ENCODE measurements at regions of chr9 and their contacts with region 1.

Region 1: GRCh38 chr9:120916588-120916987 is 10.0 kb downstream of the TRAF1 start:
- DNase-seq: no peak
- H3K4me3 Mint-ChIP-seq: peak overlapping the region; percentile 35
- H3K27ac Mint-ChIP-seq: peak overlapping the region; percentile 82
- H3K4me1 Mint-ChIP-seq: peaks cover 85% of the 10 kb centered on the region
- H3K27me3 Mint-ChIP-seq: no peaks in the 10 kb centered on the region

Region 2: DNA sequence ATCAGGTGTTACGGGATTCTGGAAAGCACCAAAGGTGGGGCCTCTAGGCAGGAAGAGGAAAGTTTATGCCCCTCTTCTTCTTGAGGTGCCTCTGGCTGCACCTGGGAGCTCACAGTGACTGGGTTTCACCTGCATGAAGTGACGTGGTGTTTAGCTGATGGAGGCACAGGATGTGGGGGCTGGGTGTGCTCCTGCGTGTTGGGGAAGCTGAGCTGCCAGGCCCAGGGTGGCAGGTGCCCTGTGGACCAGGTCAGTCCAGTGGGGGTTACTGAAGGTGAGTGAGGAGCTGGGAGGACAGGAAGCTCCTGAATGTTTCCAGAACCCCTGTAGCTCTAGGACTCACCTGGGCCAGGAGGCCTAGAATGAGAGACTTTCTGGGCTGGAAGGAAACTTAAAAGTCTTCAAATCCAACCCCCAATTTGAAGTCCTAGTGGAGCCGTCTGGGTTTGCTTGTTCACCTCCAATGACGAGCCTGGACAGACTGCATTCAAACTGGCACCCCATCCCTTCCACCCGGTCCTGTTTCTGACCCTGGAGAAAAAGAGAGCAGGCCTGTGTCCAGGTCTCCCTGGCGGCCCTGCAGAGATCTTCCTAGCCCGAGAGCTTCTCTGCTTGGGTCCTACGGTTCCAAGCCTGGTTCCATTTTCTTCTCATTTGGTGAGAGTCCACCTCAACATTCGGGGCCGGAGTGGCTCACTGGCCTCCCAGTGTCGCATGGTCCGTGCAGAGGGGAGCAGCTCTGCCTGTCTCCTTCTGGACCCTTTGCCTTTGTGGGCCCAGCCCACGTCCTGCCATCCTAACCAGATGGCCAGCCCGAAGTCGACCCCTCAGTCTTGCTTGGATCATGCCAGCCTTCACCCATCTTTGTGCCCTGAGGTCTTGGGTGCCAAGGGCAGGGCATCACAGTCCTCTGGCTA is 12.3 kb before region 1 on chr9:
- CTCF ChIA-PET with region 1: interaction called, 8 read pairs
- POLR2A ChIA-PET with region 1: interaction called, 1,205 read pairs
- DNase-seq: peak; percentile 59
- H3K4me3 Mint-ChIP-seq: no peak overlapping the region
- H3K27ac Mint-ChIP-seq: peak overlapping the region; percentile 86
- H3K4me1 Mint-ChIP-seq: peaks cover 84% of the 10 kb centered on the region
- H3K27me3 Mint-ChIP-seq: no peaks in the 10 kb centered on the region

Region 3: DNA sequence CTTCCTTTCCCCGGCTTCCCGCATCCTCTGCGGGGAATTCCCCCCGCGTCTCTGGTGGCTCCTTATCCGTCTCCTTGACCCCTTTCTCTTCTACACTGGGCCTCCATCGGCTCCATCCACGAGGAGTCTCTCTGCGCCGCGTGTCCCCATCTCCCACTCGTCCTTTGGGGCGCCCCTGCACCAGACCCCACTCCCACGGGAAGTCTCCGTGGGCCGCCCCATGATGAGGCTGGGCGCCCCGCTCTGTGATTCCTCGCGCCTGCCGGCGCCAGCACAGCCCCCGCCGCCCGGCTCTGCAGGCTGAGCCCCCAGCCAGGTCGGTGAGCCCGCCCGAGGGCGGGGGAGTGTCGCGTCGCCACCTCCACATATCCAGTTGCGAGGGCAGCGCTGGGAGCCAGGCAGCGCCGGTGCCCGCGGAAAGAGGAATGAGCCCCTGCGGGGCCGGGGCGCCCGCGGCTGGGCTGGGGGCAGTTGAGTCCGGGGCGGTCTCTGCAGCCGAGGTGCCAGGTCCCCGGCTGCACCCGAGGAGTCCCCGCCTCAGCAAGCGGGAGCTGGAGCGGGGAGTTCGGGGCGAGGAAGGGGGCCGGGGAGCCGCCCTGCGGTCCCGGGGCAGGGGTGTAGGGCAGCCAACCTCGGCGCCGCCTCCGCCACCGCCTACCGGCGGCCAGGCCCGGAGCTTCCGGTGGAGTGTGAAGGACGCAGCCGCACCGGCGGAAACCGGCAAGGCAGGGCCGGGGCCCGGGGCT is 12.1 kb after region 1 on chr9:
- CTCF ChIA-PET with region 1: interaction called, 18 read pairs
- POLR2A ChIA-PET with region 1: interaction called, 1,205 read pairs
- DNase-seq: peak; percentile 86
- H3K4me3 Mint-ChIP-seq: peak overlapping the region; percentile 93
- H3K27ac Mint-ChIP-seq: peak overlapping the region; percentile 100
- H3K4me1 Mint-ChIP-seq: peaks cover 79% of the 10 kb centered on the region
- H3K27me3 Mint-ChIP-seq: no peaks in the 10 kb centered on the region

Region 4: GRCh38 chr9:120936011-120936763 is 19.6 kb after region 1 on chr9:
- CTCF ChIA-PET with region 1: interaction called, 12 read pairs
- POLR2A ChIA-PET with region 1: interaction called, 1,205 read pairs
- DNase-seq: peak; percentile 89
- H3K4me3 Mint-ChIP-seq: peak overlapping the region; percentile 51
- H3K27ac Mint-ChIP-seq: peak overlapping the region; percentile 76
- H3K4me1 Mint-ChIP-seq: peaks cover 59% of the 10 kb centered on the region
- H3K27me3 Mint-ChIP-seq: peaks cover 7% of the 10 kb centered on the region